ENCODE measurements at regions of chr22 and their contacts with region 1.

Region 1: GRCh38 chr22:20156611-20157429 is 6.0 kb upstream of the CCDC188 start:
- DNase-seq: peak; percentile 3
- H3K4me3 ChIP-seq: no peak overlapping the region
- CTCF ChIP-seq: peak; percentile 95

Region 2: DNA sequence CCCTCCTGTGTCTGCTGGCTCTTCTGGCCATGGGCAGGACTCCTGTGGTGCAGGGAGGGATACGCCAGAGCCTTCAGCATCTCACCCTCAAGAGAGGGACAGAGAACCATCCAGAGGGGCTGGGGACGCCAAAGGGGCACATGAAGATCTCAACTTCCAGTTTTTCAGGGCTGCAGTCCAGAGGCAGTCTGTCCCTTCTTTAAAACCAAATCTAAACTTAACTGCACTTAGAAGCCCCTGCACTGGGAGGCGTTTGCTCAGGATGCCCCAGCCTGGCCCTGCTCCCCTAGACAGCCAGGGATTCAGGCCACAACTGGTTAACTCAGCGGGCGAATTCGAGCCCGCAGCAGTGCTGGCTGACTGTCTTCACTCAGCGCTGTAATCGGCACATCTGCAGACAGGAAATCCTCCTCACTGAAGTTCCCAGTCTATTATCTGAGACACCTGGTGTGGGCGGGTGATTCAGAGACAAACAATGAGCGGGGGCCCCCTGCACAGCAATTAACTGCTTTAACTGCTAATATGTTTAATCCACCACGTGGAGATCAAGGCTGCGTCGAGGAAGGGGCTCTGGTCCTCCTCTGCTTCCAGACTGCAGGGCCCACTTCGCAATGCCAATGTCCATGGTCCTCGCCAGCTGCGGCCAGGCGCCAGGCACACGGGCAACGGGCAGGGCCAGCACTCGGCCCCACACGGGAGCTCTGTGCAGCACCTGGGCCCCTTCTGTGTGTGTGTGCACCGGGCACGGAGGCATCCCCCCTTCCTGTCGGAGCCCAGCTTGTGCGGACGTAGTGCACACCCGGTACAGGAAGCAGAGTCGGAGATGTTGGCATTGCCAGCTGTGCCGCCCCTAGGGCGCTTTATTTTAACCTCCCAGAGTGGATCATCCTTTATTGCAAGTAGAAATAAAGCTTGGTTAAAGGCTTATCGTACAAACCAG is 265.2 kb before region 1 on chr22:
- CTCF ChIA-PET with region 1: no interaction called
- POLR2A ChIA-PET with region 1: no interaction called
- DNase-seq: no peak
- H3K4me3 ChIP-seq: no peak overlapping the region
- CTCF ChIP-seq: no peak

Region 3: GRCh38 chr22:20174785-20175596 is 18.2 kb after region 1 on chr22:
- CTCF ChIA-PET with region 1: interaction called, 14 read pairs
- POLR2A ChIA-PET with region 1: no interaction called
- DNase-seq: no peak
- H3K4me3 ChIP-seq: no peak overlapping the region
- CTCF ChIP-seq: peak; percentile 41

Region 4: DNA sequence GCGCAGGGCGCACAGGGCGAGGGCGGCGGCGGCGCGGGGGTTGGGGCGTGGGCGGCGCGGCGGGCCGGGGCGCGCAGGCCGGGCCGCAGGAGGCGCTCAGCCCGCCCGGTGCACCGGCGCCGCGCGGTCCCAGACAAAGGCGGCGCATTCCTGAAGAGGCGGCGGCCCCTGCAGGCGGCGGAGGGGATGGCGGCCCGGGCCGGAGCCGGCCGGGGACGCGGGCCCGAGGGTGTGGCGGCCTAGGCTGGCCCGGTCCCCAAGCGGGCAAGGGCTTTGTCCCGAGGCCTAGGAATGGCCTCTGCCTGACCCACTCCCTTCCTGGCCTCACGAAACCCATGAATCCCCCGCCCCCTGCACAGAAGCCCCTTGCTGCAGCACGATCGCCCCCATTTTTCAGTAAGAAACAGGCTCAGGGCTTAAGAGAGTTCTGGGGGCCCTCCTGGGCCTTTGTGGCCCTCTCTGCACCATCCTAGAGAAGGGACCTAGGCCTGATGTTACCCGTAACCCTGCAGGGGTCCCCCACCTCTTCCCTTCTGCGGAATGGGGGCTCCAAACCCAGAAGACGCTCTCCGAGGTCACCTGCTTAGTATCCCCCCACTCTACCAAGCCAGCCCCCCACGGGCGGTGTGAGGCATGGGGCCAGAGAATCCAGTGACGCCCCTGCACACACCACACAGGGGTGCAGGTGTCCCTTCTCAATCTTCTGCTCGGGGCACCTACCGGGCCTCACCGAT is 111.6 kb after region 1 on chr22 and contains the start of gene RTN4R:
- CTCF ChIA-PET with region 1: interaction called, 32 read pairs
- POLR2A ChIA-PET with region 1: no interaction called
- DNase-seq: no peak
- H3K4me3 ChIP-seq: peak within 1 kb of the TSS; percentile 1; the same call in 1 of the 2 replicates
- CTCF ChIP-seq: peak; percentile 79

Region 5: GRCh38 chr22:20283674-20284066 is 126.8 kb after region 1 on chr22:
- CTCF ChIA-PET with region 1: interaction called, 89 read pairs
- POLR2A ChIA-PET with region 1: no interaction called
- DNase-seq: no peak
- H3K4me3 ChIP-seq: no peak overlapping the region
- CTCF ChIP-seq: no peak

Region 6: DNA sequence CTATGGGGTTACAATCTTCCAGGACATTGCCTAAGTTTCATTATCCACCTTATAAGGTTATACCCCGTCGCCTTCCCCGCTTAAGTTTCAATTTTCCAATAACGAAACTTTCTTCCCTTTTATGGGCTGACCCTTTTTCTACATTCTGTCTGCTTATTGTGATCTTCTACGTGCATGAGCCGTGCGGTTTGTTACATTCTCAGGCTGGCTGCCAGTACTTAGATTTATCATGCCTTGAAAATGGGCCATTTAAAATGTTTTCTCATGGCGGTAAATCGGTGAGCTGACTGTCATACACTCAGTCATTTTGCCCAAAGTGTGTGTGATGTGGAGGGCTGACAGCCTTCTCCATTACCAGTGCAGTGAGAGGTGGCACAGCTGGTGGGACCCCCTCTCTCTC is 139.8 kb after region 1 on chr22:
- CTCF ChIA-PET with region 1: interaction called, 26 read pairs
- POLR2A ChIA-PET with region 1: no interaction called
- DNase-seq: no peak
- H3K4me3 ChIP-seq: no peak overlapping the region
- CTCF ChIP-seq: no peak

Measured in AG04449 (cell line).